ENCODE measurements at regions of chr3 and their contacts with region 1.

Region 1: GRCh38 chr3:112531358-112531781 is 30.4 kb downstream of the ATG3 start:
- DNase-seq: no peak
- ATAC-seq: no peak

Region 2: GRCh38 chr3:112111785-112112402 is 419.5 kb before region 1 on chr3:
- intact Hi-C with region 1: loop called in 1 of 2 experiments (anchors 5 kb)
- DNase-seq: no peak
- ATAC-seq: peak; percentile 65 to 84

Measured in left cardiac atrium (tissue), 4 donors.